ENCODE measurements at regions of chr6 and their contacts with region 1.

Region 1: GRCh38 chr6:32984605-32985389 is 16.4 kb downstream of the BRD2 start:
- DNase-seq: peak; percentile 52 to 86
- ATAC-seq: peak; percentile 75 to 83
- H3K4me3 ChIP-seq: no peak overlapping the region
- H3K27ac ChIP-seq: no peak overlapping the region
- H3K4me1 ChIP-seq: peaks cover 11% of the 10 kb centered on the region
- CTCF ChIP-seq: peak; percentile 87
- EP300 ChIP-seq: no peak
- POLR2A ChIP-seq: no peak
- RAD21 ChIP-seq: peak; percentile 84 to 85

Region 2: DNA sequence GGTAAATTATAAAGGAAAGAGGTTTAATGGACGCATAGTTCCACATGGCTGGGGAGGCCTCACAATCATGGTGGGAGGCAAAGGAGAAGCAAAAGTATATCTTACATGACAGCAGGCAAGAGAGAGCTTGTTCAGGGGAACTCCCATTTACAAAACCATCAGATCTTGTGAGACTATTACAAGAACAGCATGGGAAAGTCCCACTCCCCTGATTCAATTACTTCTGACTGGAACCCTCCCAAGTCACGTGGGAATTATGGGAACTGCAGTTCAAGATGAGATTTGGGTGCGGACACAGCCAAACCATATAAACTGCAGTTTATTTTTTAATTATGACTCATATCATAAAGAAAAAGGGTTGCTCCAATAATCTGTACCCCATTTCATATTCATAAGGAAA is 265.9 kb before region 1 on chr6:
- CTCF ChIA-PET with region 1: no interaction called
- POLR2A ChIA-PET with region 1: no interaction called
- DNase-seq: no peak
- ATAC-seq: no peak
- H3K4me3 ChIP-seq: no peak overlapping the region
- H3K27ac ChIP-seq: no peak overlapping the region
- H3K4me1 ChIP-seq: no peaks in the 10 kb centered on the region
- CTCF ChIP-seq: no peak
- EP300 ChIP-seq: no peak
- POLR2A ChIP-seq: no peak
- RAD21 ChIP-seq: no peak

Region 3: DNA sequence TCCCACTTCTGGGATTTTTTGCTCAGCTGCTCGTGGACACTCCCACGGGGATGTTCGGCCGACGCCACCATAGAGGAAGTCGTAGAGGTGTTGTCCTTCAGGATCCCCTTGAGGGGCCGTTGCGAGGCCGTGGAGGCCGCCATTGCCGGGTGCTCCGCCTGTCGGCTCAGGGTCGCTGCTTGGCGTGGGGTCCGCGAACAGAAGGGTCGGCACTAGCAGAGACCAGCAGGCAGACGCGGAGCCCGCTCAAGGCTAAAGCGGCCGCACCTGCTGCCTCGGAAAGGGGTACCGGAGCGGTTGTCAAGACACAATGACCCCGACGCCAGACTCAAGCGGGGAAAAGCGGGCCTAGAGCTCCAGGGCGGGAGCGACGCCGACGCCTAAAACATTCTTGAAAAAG is 105.1 kb before region 1 on chr6:
- CTCF ChIA-PET with region 1: interaction called, 37 read pairs
- POLR2A ChIA-PET with region 1: no interaction called
- DNase-seq: no peak
- ATAC-seq: no peak
- H3K4me3 ChIP-seq: no peak overlapping the region
- H3K27ac ChIP-seq: no peak overlapping the region
- H3K4me1 ChIP-seq: no peaks in the 10 kb centered on the region
- CTCF ChIP-seq: no peak
- EP300 ChIP-seq: no peak
- POLR2A ChIP-seq: no peak
- RAD21 ChIP-seq: no peak

Region 4: GRCh38 chr6:32933636-32934085 is 51.1 kb before region 1 on chr6:
- CTCF ChIA-PET with region 1: interaction called, 124 read pairs
- POLR2A ChIA-PET with region 1: interaction called, 4 read pairs
- DNase-seq: peak; percentile 61 to 65
- ATAC-seq: peak; percentile 66 to 78; a peak in 4 of 6 replicates
- H3K4me3 ChIP-seq: no peak overlapping the region
- H3K27ac ChIP-seq: no peak overlapping the region
- H3K4me1 ChIP-seq: no peaks in the 10 kb centered on the region
- CTCF ChIP-seq: peak; percentile 73
- EP300 ChIP-seq: no peak
- POLR2A ChIP-seq: no peak
- RAD21 ChIP-seq: peak; percentile 49 to 58; a peak in 4 of 5 replicates

Region 5: DNA sequence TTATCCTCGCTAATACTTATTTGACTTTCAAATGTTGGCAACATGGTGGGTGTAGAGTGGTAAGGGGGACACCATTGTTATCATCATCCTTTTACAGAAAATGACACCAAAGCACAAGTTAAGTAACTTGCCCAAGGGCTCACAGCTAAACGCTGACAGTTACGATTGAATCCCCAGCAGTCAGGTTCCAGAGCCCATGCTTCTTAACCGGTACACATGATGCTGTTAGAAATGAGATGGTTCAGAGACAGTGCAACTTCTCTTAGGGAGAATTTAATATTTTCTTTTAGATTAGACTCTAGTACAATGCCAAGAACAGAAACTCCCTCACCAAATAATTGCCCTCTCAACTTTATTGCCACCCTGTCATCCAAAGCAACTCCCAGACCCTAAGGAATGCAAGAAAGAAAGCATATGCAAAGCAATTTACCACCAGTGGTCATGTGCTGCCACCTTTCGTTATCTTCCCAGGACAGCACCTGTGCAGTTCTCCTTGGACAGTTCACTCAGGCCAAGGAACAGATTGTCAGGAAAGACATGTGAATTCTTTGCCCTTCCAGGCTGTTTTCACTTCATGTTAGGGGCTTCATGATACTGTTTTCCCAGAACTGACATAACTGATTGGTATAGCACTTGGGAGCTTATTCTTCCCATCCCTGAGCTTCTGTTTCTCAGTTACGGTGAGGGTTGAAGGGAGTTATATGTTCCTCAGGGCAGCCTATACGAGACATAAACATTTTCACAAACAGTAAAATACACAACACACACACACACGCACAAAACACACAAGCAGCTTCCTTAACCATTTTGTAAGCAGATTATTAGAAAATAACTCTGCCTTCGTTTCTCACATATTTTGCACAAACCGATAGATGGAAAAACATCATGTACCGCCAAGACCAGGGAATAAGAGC is 37.0 kb before region 1 on chr6:
- CTCF ChIA-PET with region 1: interaction called, 40 read pairs
- POLR2A ChIA-PET with region 1: no interaction called
- DNase-seq: peak in 1 of 2 experiments; percentile 75
- ATAC-seq: peak; percentile 92 to 95
- H3K4me3 ChIP-seq: no peak overlapping the region
- H3K27ac ChIP-seq: no peak overlapping the region
- H3K4me1 ChIP-seq: peaks cover 4% of the 10 kb centered on the region; the same call in 1 of the 3 replicates
- CTCF ChIP-seq: peak; percentile 78
- EP300 ChIP-seq: no peak
- POLR2A ChIP-seq: no peak
- RAD21 ChIP-seq: peak; percentile 91 to 94

Region 6: DNA sequence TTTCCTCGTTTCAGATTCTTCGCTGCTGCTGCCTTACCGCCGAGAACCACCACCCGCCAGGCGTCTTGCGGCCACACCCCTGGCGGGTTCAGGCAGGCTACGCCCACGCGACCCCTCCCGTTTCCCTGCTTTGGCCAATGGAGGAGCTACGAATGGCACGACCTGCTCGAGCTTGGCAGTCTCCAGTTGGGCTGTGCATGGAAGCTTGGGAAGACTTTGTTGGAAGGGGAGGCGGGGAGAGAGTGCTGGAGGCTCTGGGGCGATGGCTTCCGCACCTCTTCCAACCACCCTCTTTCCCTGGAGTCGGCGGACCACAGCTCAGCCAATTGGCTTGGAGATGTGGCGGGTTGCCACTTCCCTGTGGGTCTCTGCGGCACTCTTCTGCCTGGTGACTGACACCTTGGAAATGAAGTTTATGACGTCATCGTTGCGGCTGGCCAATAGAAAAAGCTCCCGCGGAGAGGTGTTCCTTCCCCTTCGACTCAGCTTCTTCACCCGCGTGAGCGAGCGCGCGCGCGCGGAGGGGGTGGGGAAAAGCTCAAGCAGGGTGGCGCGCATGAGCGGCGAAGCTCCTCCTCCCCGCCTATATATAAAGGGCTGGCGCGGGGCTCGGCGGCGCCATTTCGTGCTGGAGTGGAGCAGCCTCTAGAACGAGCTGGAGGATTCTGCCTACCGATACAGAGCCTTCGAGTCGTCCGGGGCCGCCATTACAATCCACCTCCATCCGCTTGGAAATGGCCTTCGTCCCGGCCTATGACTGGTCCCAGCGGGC is 13.0 kb before region 1 on chr6:
- CTCF ChIA-PET with region 1: interaction called, 63 read pairs
- POLR2A ChIA-PET with region 1: interaction called, 127 read pairs
- DNase-seq: peak; percentile 79 to 99
- ATAC-seq: peak; percentile 49 to 70
- H3K4me3 ChIP-seq: peak overlapping the region; percentile 72
- H3K27ac ChIP-seq: peak overlapping the region; percentile 99 to 100
- H3K4me1 ChIP-seq: peaks cover 22% of the 10 kb centered on the region
- CTCF ChIP-seq: no peak
- EP300 ChIP-seq: no peak
- POLR2A ChIP-seq: peak; percentile 99
- RAD21 ChIP-seq: no peak

Measured in A549 (cell line).